Left lung (tissue), 14 donors: ENCODE measurements at regions of chr20 and their contacts with region 1.

Region 1: DNA sequence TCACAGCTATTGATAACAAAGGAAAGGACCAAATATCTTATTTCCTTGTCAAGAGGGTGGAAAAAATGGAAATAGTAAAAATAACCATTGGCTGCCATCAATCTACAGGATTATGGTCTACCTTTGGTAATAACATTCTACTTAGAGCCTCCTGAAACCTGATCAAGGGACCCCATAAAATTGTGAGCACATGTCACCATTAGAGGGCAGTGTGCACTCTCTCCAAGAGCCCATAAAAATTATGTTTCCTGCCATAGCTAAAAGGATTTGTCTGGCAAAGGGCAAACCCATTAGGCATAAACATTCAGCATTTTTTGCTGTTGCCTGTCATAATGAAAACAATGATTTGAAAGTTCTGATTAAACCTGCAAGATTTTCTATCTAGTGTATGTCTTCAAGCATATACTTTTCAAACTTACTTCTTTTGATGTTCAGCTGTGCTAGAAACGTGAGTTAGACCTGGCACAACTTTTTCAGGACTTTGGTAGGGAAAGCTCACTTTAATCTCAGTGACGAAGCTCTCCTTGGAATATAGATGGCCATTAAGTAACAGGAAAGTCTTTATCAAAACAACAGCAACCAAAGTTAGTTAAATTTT is 120.7 kb upstream of the ZFP64 start:
- DNase-seq: peak in 2 of 4 donors; percentile 56 to 79
- ATAC-seq: peak; percentile 90
- H3K4me3 ChIP-seq: no peak overlapping the region
- H3K27ac ChIP-seq: no peak overlapping the region
- H3K4me1 ChIP-seq: no peaks in the 10 kb centered on the region
- H3K27me3 ChIP-seq: peaks cover 0 to 15% of the 10 kb centered on the region in 2 donors
- CTCF ChIP-seq: peak; percentile 58 to 64

Region 2: DNA sequence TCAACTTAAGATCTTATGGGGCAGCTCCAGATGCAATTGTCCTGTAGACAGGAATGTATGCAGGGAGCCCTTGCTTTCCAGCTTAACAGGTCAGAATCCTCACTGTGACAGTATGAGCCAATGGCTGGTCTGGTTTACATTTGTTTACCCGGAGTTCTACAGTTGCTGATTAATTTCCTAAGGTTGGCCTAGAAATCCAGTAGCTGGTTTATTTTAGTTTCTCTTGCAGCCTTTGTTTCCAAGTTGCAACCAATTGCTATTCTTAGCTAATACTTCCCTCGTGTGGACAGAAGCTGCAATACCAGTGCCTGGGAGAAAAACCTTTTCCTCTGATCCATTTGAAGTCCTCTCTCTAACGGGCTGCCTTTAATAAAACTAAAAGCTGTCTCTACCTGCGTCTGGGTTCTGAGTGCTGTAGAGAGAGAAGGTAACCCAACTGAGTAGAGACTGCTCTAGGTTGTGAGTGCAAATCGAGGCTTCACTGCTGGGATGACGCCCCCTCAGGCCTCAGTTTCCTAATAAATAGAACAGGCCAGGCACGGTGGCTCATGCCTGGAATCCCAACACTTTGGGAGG is 1235.5 kb after region 1 on chr20:
- intact Hi-C with region 1: loop called in 1 of 2 experiments (anchors 10 kb)
- DNase-seq: peak in 2 of 4 donors; percentile 73 to 77
- ATAC-seq: peak; percentile 87
- H3K4me3 ChIP-seq: no peak overlapping the region
- H3K27ac ChIP-seq: no peak overlapping the region
- H3K4me1 ChIP-seq: peaks cover 0 to 4% of the 10 kb centered on the region in 2 donors
- H3K27me3 ChIP-seq: no peaks in the 10 kb centered on the region
- CTCF ChIP-seq: peak; percentile 63 to 65